WTC11 (cell line): ENCODE measurements at regions of chr15 and their contacts with region 1.

Region 1: DNA sequence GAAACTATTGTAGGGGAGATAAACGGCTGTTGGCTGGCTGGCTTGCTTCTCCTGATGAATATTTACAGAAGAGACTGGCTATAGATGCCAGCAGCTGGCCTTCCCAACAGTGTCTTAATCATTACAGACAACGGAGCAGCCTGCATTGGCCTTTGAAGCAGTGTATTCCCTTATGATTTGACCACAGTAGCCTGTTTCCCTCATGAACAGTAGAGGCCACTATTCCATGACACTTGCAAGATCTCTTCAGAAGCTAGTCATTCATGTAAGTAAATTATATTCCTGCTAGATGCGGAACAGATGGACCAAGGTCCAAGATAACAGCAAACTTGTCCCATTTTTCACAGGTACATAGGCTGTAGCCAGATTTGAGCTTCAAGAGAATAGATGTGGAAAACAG is 47.3 kb downstream of the TMCO5A start:
- DNase-seq: no peak
- ATAC-seq: peak; percentile 62
- H3K4me3 Mint-ChIP-seq: no peak overlapping the region
- H3K27ac Mint-ChIP-seq: no peak overlapping the region
- H3K4me1 Mint-ChIP-seq: peaks cover 5% of the 10 kb centered on the region
- H3K27me3 Mint-ChIP-seq: no peaks in the 10 kb centered on the region
- CTCF ChIP-seq: no peak

Region 2: GRCh38 chr15:37860896-37861295 is 120.9 kb before region 1 on chr15:
- CTCF ChIA-PET with region 1: no interaction called
- POLR2A ChIA-PET with region 1: no interaction called
- DNase-seq: no peak
- ATAC-seq: no peak
- H3K4me3 Mint-ChIP-seq: no peak overlapping the region
- H3K27ac Mint-ChIP-seq: no peak overlapping the region
- H3K4me1 Mint-ChIP-seq: no peaks in the 10 kb centered on the region
- H3K27me3 Mint-ChIP-seq: no peaks in the 10 kb centered on the region
- CTCF ChIP-seq: no peak

Region 3: GRCh38 chr15:37995461-37996347 is 13.9 kb after region 1 on chr15:
- CTCF ChIA-PET with region 1: interaction called, 20 read pairs
- POLR2A ChIA-PET with region 1: no interaction called
- DNase-seq: no peak
- ATAC-seq: peak; percentile 85
- H3K4me3 Mint-ChIP-seq: no peak overlapping the region
- H3K27ac Mint-ChIP-seq: no peak overlapping the region
- H3K4me1 Mint-ChIP-seq: no peaks in the 10 kb centered on the region
- H3K27me3 Mint-ChIP-seq: no peaks in the 10 kb centered on the region
- CTCF ChIP-seq: peak; percentile 29

Region 4: DNA sequence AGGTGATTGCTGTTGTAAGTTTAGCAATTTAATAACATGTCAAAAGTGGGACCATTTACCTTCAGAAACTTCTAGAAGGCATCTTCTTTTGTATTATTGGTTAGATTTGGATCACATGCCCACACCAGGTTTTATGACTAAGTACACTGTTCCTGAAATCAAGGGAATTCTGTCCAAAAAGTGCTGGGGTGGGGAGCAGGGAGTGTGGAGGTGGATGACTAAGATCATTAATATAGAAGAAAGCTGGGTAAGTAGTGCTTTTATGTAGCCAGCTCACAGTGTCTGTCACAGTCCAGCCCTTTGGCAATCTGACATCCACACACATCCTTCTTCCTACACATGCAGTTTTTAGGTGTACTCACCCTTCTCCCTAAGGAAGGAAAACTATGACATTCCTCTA is 72.7 kb after region 1 on chr15:
- CTCF ChIA-PET with region 1: no interaction called
- POLR2A ChIA-PET with region 1: no interaction called
- DNase-seq: no peak
- ATAC-seq: no peak
- H3K4me3 Mint-ChIP-seq: no peak overlapping the region
- H3K27ac Mint-ChIP-seq: no peak overlapping the region
- H3K4me1 Mint-ChIP-seq: peaks cover 23% of the 10 kb centered on the region
- H3K27me3 Mint-ChIP-seq: no peaks in the 10 kb centered on the region
- CTCF ChIP-seq: no peak

Region 5: GRCh38 chr15:39976291-39977274 is 1994.8 kb after region 1 on chr15:
- CTCF ChIA-PET with region 1: no interaction called
- POLR2A ChIA-PET with region 1: interaction called, 10 read pairs
- DNase-seq: peak; percentile 60
- ATAC-seq: peak; percentile 89
- H3K4me3 Mint-ChIP-seq: peak overlapping the region; percentile 57
- H3K27ac Mint-ChIP-seq: peak overlapping the region; percentile 84
- H3K4me1 Mint-ChIP-seq: peaks cover 9% of the 10 kb centered on the region
- H3K27me3 Mint-ChIP-seq: no peaks in the 10 kb centered on the region
- CTCF ChIP-seq: no peak